Activated CD4-positive, alpha-beta T cell treated with anti-CD3 and anti-CD28 coated beads, Interleukin-2, amount 10 ng/mL, durations not matched to agents 24 days and 14 days (primary cell): ENCODE measurements at regions of chr12 and their contacts with region 1.

Region 1: DNA sequence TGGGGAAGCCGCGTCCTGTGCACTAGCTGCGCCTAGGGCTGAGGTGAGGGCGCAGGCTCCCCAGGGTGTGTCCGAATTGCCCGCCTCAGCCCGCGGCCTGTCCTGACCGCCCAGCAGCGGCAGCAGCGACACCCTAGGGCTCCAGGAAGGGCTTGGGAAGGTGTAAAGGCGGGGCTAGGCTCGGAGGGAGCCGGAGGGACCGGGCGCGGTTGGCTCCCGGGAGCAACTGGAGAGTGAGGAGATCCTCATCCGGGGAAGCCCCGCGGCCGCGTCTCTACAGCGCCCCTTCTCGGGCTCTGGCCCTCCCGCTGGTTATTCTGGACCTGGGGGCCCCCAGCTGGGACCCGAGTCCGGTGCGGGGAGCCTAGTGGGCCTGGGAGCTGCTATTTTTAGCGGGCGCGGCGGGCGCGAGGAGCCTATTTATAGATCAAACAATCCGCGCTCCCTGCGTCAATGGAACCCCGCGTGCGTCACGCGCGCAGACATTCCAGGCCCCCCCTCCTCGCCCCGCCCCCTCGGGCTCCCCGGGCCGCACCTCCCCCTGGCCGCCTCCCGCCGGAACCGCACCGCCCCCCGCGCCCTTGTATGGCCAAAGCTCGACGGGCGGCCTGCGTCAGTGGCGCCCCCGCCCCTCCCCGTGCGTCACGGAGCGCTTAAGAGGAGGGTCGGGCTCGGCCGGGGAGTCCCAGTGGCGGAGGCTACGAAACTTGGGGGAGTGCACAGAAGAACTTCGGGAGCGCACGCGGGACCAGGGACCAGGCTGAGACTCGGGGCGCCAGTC is at the start of gene NR4A1:
- DNase-seq: peak; percentile 100
- H3K4me3 Mint-ChIP-seq: peak within 1 kb of the TSS; percentile 97
- H3K27ac Mint-ChIP-seq: peak within 1 kb of the TSS; percentile 95
- H3K4me1 Mint-ChIP-seq: peaks cover 40% of the 10 kb centered on the region
- H3K27me3 Mint-ChIP-seq: peaks cover 5% of the 10 kb centered on the region
- total RNA-seq, gene NR4A1: 55.0 and 57.7 TPM in 2 replicates

Region 2: GRCh38 chr12:51823875-51824565 is 226.9 kb before region 1 on chr12:
- intact Hi-C with region 1: loop called (anchors 1 kb)
- DNase-seq: peak; percentile 72
- H3K4me3 Mint-ChIP-seq: no peak overlapping the region
- H3K27ac Mint-ChIP-seq: no peak overlapping the region
- H3K4me1 Mint-ChIP-seq: peaks cover 26% of the 10 kb centered on the region
- H3K27me3 Mint-ChIP-seq: peaks cover 10% of the 10 kb centered on the region

Region 3: DNA sequence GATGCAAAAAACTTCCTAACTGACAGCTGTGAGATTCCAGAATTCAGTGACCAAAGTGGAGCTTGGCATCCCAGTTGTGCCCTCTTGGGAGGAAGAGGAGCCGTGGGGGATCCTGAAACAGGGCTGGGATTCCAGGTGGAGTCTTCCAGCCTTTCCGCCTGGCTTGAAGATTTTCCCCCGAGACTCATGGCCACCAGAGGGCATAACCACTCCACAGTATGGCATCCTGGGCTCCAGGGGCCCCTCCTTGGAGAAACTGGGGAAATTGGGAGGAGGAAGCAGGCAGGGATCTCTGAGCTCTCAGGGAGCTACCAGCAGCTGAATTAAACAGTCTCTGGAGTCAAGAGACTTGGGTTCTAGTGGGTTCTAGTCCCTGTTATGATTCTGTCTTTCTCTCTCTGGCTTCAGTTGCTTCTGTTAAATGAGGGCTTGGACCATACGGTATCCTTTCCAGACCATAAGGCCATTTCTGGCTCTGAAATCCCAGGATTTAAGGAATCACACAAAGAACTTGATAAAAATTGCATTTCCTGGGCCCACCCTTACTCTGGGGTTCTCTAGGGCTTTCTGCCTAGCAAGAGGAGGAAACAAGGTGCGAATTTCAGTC is 46.8 kb before region 1 on chr12:
- intact Hi-C with region 1: loop called (anchors 1 kb)
- DNase-seq: peak; percentile 68
- H3K4me3 Mint-ChIP-seq: no peak overlapping the region
- H3K27ac Mint-ChIP-seq: no peak overlapping the region
- H3K4me1 Mint-ChIP-seq: peaks cover 21% of the 10 kb centered on the region
- H3K27me3 Mint-ChIP-seq: peaks cover 31% of the 10 kb centered on the region

Region 4: DNA sequence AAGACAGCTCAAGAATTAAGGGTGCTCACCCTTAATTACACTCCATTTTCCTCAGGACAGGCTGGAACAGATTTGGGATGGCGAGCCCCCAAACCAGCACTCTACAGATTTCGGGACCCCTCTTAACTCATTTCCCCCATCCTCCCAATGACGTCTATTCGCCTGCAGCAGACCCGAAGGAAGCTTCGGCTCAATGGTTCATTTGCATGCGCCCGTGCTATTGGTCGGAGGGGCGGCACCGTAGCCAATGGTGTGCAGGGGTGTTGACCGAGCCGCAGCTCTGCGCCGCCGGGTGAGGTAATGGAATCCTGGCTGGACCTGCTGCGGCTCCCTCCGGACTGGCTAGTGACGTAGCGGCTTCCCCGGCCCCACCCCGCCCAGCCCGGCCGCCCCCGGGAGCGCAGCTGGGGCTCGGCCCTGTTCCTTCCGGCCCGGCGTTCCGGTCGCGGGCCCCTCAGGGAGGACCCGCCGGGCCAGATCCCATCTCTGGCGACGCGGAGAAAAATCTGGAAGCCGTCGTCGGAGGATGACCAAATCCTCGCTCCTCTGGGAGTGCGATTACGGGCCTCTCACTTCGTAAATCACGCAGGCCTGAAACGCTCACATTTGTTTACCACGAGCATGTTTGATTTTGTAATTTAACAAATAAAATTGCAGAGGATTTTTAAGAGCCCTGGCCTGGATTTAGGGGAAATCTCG is 18.0 kb before region 1 on chr12:
- intact Hi-C with region 1: loop called (anchors 1 kb)
- DNase-seq: peak; percentile 97
- H3K4me3 Mint-ChIP-seq: peak overlapping the region; percentile 81
- H3K27ac Mint-ChIP-seq: peak overlapping the region; percentile 78
- H3K4me1 Mint-ChIP-seq: peaks cover 37% of the 10 kb centered on the region
- H3K27me3 Mint-ChIP-seq: peaks cover 20% of the 10 kb centered on the region

Region 5: DNA sequence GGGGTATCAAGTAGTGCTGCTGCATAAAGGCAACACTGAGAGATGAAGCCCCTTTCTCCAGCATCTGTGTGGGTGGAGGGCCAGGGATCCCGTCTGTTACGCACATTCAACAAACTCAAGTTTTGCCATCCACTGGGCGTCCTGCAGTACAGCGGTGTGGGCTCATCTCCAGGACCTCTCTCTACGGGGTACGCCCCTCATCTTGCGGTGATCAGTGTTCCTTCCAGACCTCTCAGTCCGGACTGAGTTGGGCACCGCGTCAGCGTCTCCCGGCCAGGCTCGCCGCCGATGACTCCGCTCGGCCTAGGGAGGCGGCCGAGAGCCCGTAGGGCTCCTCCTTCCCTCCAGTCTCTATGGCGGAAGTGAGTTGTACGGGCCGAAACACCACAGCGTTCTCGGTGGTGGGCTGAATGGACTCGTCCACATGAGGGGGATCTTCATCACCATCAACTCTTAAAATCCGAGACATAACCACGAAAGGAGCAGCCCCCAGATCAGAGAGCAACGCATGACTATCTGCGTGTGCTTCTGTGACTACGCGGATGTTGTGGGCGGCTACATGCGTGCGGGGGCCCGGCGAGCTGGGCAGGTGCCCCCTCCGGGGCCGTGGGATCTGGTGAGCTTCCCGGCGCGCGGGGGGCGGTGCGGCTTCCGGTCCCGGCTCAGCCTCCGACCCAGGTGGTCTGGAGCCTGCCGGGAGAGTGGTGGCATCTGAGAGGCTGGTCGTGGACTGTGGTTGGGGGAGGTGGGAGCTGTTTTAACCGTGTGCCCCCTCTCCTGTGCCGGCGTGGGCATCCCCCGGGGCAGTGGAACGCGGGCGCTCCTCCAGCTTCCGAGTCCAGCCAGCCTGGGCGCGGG is 18.6 kb after region 1 on chr12 and contains the start of gene ATG101:
- intact Hi-C with region 1: loop called (anchors 1 kb)
- DNase-seq: peak; percentile 96
- H3K4me3 Mint-ChIP-seq: peak within 1 kb of the TSS; percentile 97
- H3K27ac Mint-ChIP-seq: peak within 1 kb of the TSS; percentile 98
- H3K4me1 Mint-ChIP-seq: peaks cover 45% of the 10 kb centered on the region
- H3K27me3 Mint-ChIP-seq: no peaks in the 10 kb centered on the region
- total RNA-seq, gene ATG101: 51.2 and 61.4 TPM in 2 replicates

Region 6: DNA sequence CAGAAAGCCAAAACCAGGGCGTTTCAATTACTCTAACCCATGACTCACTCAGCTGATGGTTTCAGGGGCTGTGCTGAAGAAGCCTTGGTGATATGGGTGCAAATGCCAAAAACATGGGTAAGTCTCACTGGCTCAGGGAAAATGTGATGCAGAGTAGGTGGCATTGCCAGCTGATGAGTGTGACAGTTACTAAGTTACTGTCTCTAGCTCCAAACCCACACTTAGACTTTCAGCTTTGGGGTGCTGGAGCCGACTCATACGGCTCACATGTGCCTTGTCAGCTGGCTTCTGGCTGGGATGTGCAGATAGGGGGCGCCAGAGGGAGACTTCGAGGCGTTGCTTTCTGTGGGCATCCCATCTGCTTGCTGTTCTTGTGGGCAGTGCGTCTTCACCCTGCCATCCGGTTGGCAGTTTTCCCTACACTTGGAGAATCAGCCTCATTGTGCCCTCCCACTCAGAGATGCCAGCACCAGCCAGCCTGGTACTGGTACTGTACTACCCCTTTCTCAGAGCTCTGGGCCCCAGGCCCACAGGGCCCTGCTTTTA is 171.0 kb after region 1 on chr12:
- intact Hi-C with region 1: no loop called
- DNase-seq: peak; percentile 92
- H3K4me3 Mint-ChIP-seq: no peak overlapping the region
- H3K27ac Mint-ChIP-seq: no peak overlapping the region
- H3K4me1 Mint-ChIP-seq: peaks cover 12% of the 10 kb centered on the region
- H3K27me3 Mint-ChIP-seq: peaks cover 45% of the 10 kb centered on the region

Region 7: GRCh38 chr12:52243856-52244614 is 193.1 kb after region 1 on chr12:
- intact Hi-C with region 1: loop called (anchors 5 kb)
- DNase-seq: peak; percentile 92
- H3K4me3 Mint-ChIP-seq: peak overlapping the region; percentile 91
- H3K27ac Mint-ChIP-seq: peak overlapping the region; percentile 99
- H3K4me1 Mint-ChIP-seq: peaks cover 63% of the 10 kb centered on the region
- H3K27me3 Mint-ChIP-seq: peaks cover 1% of the 10 kb centered on the region

Region 8: DNA sequence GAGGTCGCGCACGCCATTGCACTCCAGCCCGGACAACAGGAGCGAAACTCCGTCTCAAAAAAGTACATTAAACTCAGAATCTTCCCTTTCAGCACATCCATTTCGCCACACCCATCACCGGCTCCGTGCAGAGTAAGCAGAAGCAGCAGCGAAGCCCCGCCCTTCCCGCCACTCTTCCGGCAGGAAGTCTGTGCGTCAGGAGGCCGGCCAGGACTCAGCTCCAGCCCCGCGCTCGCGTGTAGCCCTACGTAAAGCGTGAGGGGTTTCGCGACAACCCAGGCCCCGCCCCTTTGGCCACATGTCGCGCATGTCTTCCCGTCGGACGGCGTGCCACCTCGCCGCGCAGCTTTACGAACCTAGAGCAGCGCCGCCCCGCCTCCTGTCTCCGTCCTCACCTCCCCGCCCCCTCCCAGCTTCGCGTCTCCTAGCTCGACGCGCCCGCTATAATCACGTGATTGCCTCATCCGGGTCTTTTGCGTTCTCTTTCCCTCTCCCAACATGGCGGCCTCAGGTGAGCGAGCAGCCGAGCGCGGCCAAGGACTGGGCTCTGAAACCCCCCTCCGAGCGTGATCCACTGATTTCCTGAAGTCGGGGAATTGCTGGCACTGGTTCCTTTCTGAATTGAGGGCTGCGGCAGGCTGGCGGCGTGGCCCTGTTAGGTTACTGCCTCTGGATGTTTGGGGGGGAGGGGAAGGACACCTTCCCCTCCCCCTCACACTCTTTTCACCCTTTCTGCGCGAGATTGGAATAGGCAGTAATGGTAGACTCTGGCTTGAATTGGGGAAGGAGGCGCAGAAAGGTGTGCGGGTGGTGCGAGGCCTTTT is 955.2 kb after region 1 on chr12 and contains the start of gene EIF4B:
- intact Hi-C with region 1: loop called (anchors 5 kb)
- DNase-seq: peak; percentile 100
- H3K4me3 Mint-ChIP-seq: peak within 1 kb of the TSS; percentile 88
- H3K27ac Mint-ChIP-seq: peak within 1 kb of the TSS; percentile 98
- H3K4me1 Mint-ChIP-seq: peaks cover 26% of the 10 kb centered on the region
- H3K27me3 Mint-ChIP-seq: peaks cover 4% of the 10 kb centered on the region
- total RNA-seq, gene EIF4B: 500 and 521 TPM in 2 replicates